ENCODE measurements at regions of chr4 and their contacts with region 1.

Region 1: GRCh38 chr4:38034986-38035882 is 75.0 kb downstream of the PTTG2 start:
- DNase-seq: no peak

Region 2: DNA sequence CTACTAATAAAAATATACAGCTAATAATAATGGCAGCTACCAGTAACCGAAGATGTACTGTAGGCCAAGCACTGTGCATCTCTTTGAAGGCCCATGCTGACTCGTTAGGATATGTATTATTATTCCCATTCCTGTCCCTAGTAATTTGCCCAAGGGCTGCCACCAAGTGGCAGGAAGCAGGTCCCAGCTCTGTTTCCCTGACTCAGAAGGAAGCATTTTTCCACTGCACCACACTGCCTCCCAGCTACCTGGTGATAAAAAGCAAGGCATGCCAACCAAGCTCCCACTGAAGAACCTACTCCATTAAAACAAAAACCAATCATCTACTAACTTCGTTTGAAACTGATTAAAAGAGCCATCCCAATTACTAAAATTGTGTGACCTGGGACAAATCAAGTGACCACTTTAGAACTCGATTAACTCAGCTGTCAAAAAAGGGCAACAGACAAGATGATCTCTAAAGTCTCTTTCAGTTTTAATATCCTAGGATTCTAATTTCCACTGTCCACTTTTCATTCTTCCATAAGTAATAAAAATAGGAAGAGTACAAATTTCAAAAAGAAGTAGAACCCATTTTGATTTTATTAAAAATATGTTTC is 233.1 kb before region 1 on chr4:
- intact Hi-C with region 1: loop called (anchors 1 kb)
- DNase-seq: no peak

Region 3: DNA sequence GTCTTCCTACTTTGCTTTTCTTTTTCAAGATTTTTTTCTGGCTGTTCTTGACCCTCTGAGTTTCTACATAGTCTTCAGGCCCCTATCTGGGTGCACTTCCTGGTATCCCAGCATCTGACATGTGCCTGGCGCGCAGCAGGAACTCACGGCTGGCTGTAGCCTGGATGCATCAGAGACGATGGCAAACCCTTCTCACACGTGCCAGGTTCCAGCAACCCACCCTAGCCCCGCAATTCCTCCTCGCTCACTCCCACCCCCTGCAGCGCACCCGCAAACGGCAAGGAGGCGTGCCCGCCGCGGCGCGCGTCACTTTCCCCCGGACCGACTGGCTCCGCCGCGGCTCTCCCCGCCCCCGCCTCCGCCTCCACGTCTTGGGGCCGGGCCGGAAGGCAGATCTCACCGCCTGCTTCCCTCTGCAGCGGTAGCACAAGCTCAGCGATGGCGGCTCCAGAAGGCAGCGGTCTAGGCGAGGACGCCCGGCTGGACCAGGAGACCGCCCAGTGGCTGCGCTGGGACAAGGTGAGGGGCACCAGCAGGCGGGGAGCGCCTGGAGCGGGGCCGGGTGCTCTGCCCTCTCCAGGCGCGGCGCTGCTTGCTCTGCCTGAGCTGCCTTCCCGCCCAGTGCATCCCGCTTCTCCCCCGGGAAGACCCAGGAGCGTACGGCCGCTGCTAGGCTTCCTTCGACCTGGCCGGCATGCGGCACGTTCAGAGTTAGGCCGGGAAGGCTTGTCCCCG is 208.8 kb before region 1 on chr4 and contains the start of gene PGM2:
- intact Hi-C with region 1: loop called (anchors 5 kb)
- DNase-seq: peak; percentile 97
- total RNA-seq, gene PGM2: 9.5 TPM

Region 4: DNA sequence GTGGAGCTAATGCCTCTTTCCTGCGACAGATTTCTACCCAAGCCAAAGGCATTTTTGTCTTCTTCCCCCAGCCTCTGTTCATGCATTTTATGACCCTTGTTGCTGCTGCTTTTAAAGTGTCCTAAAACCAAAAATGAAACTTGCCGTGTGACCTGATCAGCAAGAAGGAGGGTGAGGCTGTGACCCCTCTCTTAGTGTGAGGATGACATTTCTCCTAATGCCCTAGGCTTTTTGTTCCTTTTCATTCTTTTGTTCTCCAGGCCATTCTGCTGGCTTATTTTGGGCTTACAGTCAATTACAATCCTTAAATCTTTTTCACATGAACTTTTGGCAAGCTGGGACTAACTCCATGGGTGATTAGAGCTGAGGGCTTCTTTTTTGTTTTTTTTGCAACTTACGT is 40.7 kb before region 1 on chr4:
- intact Hi-C with region 1: no loop called
- DNase-seq: no peak